CD4-positive, alpha-beta memory T cell (primary cell): ENCODE measurements at regions of chr3 and their contacts with region 1.

Region 1: DNA sequence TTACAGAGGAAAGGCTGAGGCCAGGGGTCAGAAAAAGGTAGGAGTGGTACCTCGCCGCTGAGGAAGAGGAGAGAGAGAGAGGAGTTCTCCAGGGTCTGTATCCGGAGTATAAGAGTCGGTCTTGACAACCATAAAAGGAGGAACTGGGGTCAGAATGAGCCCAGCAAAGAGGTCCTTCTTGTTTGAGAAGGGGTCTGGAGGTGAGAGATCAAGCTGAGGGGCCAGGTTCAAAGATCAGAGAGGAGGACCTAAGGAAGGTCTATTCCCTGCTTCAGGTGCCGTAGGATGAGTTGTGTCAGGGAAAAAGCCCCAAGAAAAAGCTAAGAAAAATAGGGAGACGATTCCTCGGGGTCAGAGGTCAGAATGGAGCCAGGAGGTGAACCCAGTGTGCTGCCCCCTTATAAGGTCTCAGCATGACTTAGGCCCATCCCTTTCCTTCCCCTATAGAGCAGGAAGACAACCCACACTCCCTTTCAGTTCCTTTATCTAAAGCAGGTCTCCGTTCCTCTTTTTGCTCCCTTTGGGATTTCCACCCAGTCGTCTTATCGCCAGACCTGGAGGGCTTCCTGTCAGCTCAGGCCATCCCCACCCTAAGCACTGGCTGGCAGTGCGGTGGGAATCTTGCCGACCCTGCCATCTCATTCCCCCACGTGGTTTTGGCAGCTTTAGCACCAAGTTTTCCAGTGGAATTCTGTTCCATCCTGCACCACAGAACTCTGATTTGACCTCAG is 651 bp downstream of the MTMR14 start:
- DNase-seq: peak in 1 of 5 donors; percentile 46
- H3K4me3 ChIP-seq: peak overlapping the region; percentile 97
- H3K4me3 Mint-ChIP-seq: peak overlapping the region; percentile 91 to 99 (median 96)
- H3K27ac ChIP-seq: peak overlapping the region; percentile 77
- H3K27ac Mint-ChIP-seq: peak overlapping the region; percentile 89 to 97 (median 91)
- H3K4me1 ChIP-seq: peaks cover 37% of the 10 kb centered on the region
- H3K4me1 Mint-ChIP-seq: peaks cover 19 to 50% (median 30%) of the 10 kb centered on the region in 4 donors
- H3K27me3 ChIP-seq: no peaks in the 10 kb centered on the region
- H3K27me3 Mint-ChIP-seq: peaks cover 0 to 1% of the 10 kb centered on the region in 2 donors

Region 2: DNA sequence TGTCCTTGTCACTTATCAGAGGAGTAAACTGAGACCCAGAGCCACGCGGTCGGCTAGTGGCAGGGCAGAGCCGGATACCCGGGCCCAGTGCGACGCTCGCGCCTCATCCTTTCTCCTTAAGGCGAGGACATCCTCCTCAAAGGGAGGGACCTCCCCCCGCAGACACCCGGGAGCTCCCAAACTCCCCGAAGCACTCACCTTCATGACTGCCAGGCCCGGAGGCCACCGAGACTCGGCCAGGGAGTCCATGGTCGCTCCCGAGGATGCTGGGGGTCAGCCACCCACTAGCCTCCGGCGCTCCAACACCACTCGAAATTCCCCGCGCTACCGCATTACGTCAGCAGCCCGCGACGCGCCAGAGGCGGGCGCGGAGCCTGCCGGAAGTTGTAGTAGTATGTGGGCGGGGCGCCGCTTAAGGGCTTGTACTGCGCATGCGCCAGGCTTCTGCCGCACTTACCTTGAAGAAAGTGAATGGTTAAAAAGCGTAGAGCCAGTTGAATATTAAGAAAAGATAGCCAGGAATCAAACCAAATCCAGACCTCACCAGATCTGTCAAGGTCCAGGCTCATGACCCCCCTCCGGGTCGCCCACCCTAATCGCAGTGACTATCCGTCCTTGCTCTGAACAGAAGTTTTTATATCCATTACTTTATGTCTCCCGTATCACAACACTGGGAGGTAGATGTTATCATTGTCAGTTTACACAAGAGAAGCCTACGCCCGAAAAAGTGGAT is 686.7 kb before region 1 on chr3 and contains the start of gene RAD18:
- CTCF ChIA-PET with region 1: no interaction called
- POLR2A ChIA-PET with region 1: interaction called, 3 read pairs
- intact Hi-C with region 1: loop called (anchors 1 kb)
- DNase-seq: peak; percentile 91 to 94 (median 92)
- H3K4me3 ChIP-seq: peak within 1 kb of the TSS; percentile 87 to 92
- H3K4me3 Mint-ChIP-seq: peak within 1 kb of the TSS; percentile 92 to 97 (median 94)
- H3K27ac ChIP-seq: peak within 1 kb of the TSS; percentile 94
- H3K27ac Mint-ChIP-seq: peak within 1 kb of the TSS; percentile 96 to 99 (median 98)
- H3K4me1 ChIP-seq: peaks cover 21% of the 10 kb centered on the region
- H3K4me1 Mint-ChIP-seq: peaks cover 13 to 39% (median 23%) of the 10 kb centered on the region in 4 donors
- H3K27me3 ChIP-seq: no peaks in the 10 kb centered on the region
- H3K27me3 Mint-ChIP-seq: peaks cover 1% of the 10 kb centered on the region in 2 donors
- total RNA-seq, gene RAD18: 17.5 to 17.6 TPM

Region 3: DNA sequence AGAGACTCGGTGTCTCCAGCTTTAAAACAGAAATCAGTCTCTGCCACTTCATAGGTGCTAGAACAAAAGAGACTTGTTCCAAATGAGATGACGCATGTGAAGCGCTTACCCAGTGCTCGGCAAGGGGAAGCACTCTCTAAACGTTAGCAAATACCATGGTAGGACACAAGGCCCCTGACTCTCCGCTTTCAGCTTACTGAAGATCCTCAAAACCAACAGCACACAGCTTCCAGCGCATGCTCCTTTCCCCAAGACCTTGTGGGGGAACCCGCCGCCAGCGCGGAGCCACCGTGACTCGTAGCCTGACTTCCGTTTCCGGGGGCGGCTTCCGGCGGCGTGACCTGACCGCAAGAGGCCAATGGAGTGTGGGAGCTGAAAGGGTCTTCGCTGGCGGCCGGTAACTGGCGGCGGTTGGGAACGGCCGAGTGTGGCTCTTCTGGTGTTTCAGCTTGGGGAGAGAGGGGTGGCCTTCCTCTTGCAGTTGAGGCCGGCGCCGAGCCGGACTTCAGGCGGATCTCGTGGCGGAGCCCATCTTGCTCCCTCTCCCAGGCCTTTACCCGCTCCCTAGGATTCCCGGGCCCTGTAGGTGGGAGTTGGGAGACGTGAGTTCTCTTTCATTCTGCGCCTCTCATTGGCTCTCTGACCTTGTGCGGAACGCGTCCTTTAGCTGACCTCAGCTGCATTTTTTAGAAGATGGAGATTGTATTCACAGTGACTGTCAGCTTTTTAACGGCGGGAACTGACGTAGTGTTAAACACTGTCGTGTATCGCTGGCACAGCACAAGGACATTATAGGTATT is 287.0 kb before region 1 on chr3 and contains the start of gene THUMPD3:
- CTCF ChIA-PET with region 1: no interaction called
- POLR2A ChIA-PET with region 1: interaction called, 19 read pairs
- intact Hi-C with region 1: loop called (anchors 1 kb)
- DNase-seq: peak; percentile 82 to 91 (median 85)
- H3K4me3 ChIP-seq: peak within 1 kb of the TSS; percentile 92 to 96
- H3K4me3 Mint-ChIP-seq: peak within 1 kb of the TSS; percentile 95 to 99 (median 98)
- H3K27ac ChIP-seq: peak within 1 kb of the TSS; percentile 91
- H3K27ac Mint-ChIP-seq: peak within 1 kb of the TSS; percentile 95 to 99 (median 98)
- H3K4me1 ChIP-seq: peaks cover 22% of the 10 kb centered on the region
- H3K4me1 Mint-ChIP-seq: peaks cover 7 to 38% (median 17%) of the 10 kb centered on the region in 4 donors
- H3K27me3 ChIP-seq: no peaks in the 10 kb centered on the region
- H3K27me3 Mint-ChIP-seq: no peaks in the 10 kb centered on the region
- total RNA-seq, gene THUMPD3: 36.9 to 39.2 TPM

Region 4: DNA sequence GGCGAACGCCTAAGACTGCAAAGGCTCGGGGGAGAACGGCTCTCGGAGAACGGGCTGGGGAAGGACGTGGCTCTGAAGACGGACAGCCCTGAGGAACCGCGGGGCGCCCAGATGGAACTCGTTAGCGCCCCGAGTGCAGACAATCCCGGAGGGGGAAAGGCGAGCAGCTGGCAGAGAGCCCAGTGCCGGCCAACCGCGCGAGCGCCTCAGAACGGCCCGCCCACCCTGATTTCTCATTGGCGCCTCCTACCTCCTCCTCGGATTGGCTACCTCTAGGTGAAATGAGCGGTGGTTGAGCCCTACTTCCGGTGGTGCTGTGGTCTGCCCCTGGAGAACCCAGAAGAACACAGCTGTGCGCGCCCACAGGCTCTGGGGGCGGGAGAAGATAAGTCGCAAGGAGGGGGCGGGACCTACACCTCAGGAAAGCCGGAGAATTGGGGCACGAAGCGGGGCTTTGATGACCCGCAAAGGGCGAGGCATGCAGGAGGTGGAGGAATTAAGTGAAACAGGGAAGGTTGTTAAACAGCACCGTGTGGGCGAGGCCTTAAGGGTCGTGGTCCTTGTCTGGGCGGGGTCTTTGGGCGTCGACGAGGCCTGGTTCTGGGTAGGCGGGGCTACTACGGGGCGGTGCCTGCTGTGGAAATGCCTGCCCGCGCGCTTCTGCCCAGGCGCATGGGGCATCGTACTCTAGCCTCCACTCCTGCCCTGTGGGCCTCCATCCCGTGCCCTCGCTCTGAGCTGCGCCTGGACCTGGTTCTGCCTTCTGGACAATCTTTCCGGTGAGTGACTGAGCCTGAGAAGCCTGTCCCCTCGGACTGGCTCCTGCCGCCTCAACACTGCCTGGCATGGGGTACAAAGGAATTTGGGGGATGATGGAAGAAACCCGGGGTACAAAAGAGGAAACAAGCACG is 99.9 kb after region 1 on chr3 and contains the start of gene OGG1:
- CTCF ChIA-PET with region 1: no interaction called
- POLR2A ChIA-PET with region 1: interaction called, 14 read pairs
- intact Hi-C with region 1: loop called (anchors 1 kb)
- DNase-seq: peak; percentile 95 to 98 (median 96)
- H3K4me3 ChIP-seq: peak within 1 kb of the TSS; percentile 58 to 92
- H3K4me3 Mint-ChIP-seq: peak within 1 kb of the TSS; percentile 88 to 98 (median 96)
- H3K27ac ChIP-seq: peak within 1 kb of the TSS; percentile 59
- H3K27ac Mint-ChIP-seq: peak within 1 kb of the TSS; percentile 93 to 98 (median 95)
- H3K4me1 ChIP-seq: peaks cover 38% of the 10 kb centered on the region
- H3K4me1 Mint-ChIP-seq: peaks cover 25 to 54% (median 39%) of the 10 kb centered on the region in 4 donors
- H3K27me3 ChIP-seq: no peaks in the 10 kb centered on the region
- H3K27me3 Mint-ChIP-seq: no peaks in the 10 kb centered on the region
- total RNA-seq, gene OGG1: 40.4 to 46.9 TPM

Region 5: DNA sequence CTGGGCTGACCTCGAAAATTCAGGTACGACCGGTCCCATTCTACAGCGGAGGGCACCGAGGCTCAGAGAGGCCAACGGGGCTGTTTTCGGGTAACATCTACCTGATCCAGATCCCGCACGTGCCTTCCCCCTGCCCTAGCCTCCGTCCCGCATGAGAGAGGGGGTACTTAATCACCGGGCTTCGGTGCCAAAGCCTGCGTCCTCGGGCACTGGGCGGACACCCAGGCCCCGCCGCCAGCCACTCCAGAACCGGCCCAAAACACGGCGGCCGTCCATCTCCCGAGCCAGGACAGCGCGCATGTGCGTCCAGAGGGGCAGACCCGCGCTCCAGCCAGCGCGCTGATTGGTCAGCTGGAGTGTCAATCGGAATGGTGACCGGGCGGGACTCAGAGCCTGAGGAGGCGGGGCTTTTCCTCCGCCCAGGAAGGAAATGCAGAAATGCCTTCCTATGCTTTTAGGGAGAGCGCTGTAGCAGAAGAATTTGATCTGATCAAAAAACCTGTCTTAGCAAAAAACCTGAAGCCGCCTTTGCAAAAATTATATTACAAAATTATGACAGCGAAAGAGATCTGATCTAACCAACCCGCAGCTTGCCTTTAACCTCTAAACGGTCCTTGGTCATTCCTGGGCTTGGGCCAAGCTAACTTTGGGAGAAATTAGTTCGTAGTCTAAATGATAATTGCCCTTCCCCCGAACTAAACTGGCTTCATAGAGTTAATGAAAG is 193.9 kb after region 1 on chr3 and contains the start of gene RPUSD3:
- CTCF ChIA-PET with region 1: no interaction called
- POLR2A ChIA-PET with region 1: no interaction called
- intact Hi-C with region 1: loop called (anchors 1 kb)
- DNase-seq: peak; percentile 92 to 98 (median 93)
- H3K4me3 ChIP-seq: peak within 1 kb of the TSS; percentile 80 to 92
- H3K4me3 Mint-ChIP-seq: peak within 1 kb of the TSS; percentile 96 to 99 (median 97)
- H3K27ac ChIP-seq: peak within 1 kb of the TSS; percentile 65
- H3K27ac Mint-ChIP-seq: peak within 1 kb of the TSS; percentile 87 to 97 (median 92)
- H3K4me1 ChIP-seq: peaks cover 23% of the 10 kb centered on the region
- H3K4me1 Mint-ChIP-seq: peaks cover 10 to 36% (median 21%) of the 10 kb centered on the region in 4 donors
- H3K27me3 ChIP-seq: no peaks in the 10 kb centered on the region
- H3K27me3 Mint-ChIP-seq: no peaks in the 10 kb centered on the region
- total RNA-seq, gene RPUSD3: 63.3 to 67.6 TPM